PC-3 (cell line): ENCODE measurements at regions of chr20 and their contacts with region 1.

Region 1: GRCh38 chr20:24781422-24781980 is 167.6 kb upstream of the CST7 start:
- DNase-seq: peak; percentile 68
- ATAC-seq: peak; percentile 92
- H3K4me3 ChIP-seq: no peak overlapping the region
- H3K27ac ChIP-seq: no peak overlapping the region
- H3K4me1 ChIP-seq: peaks cover 8% of the 10 kb centered on the region; the same call in 1 of the 2 replicates
- H3K27me3 ChIP-seq: peaks cover 43% of the 10 kb centered on the region
- CTCF ChIP-seq: peak; percentile 89

Region 2: DNA sequence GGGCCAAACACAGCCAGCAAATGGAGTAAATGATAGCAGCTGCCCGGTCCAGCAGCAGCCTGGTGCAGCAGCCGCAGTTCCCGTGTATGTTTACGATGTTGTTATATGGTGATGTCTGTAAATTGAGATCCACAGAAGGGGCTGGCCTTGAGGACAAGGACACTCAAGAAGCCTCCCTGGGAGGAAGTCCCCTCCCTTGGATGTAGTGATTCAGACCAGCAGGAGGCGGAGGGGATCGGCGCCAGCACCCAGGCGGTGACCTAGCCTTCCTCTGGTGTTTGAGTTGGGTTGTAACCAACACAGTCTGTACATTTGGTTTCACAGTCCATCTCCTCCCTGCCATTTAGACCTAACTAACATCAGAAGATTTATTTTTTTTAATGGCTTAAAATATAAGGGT is 124.3 kb before region 1 on chr20:
- CTCF ChIA-PET with region 1: no interaction called
- POLR2A ChIA-PET with region 1: no interaction called
- intact Hi-C with region 1: loop called (anchors 2 kb)
- DNase-seq: peak; percentile 81
- ATAC-seq: peak; percentile 82
- H3K4me3 ChIP-seq: no peak overlapping the region; the same call in 1 of the 2 replicates
- H3K27ac ChIP-seq: no peak overlapping the region
- H3K4me1 ChIP-seq: peaks cover 24% of the 10 kb centered on the region
- H3K27me3 ChIP-seq: no peaks in the 10 kb centered on the region
- CTCF ChIP-seq: peak; percentile 55